ENCODE measurements at regions of chr3 and their contacts with region 1.

Region 1: DNA sequence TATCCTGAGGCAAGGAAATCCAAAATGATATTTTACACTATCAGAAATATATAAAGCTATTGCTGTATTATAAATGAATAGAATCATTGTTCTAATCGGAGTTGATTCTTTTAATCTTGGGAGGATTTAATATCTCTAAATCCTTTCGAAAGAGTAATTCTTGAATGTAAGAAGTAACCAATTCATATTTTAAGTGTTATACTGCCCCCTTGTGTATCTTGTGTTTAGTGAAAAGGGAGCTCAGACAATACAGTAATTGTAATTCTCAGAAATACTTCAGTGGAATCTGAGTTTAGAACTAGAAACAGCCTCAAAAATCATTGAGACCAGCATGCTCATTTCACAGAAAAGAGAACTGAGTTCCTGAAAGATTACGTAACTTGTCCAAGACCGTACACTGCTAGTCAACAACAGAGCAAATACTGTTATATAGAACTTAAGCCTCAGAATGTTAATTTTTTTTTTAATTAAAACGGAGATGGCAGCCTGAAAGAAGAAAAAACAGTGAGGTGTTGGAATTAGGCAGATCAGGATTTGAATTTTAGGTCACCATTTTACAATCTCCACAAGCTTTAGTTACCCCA is 42.9 kb downstream of the PLCH1 start:
- DNase-seq: no peak
- ATAC-seq: peak; percentile 57 to 78
- H3K4me3 ChIP-seq: no peak overlapping the region
- H3K27ac ChIP-seq: no peak overlapping the region
- H3K4me1 ChIP-seq: no peaks in the 10 kb centered on the region
- H3K27me3 ChIP-seq: no peaks in the 10 kb centered on the region

Region 2: GRCh38 chr3:155352900-155353490 is 349.0 kb before region 1 on chr3:
- intact Hi-C with region 1: loop called (anchors 5 kb)
- DNase-seq: no peak
- ATAC-seq: no peak
- H3K4me3 ChIP-seq: no peak overlapping the region
- H3K27ac ChIP-seq: no peak overlapping the region
- H3K4me1 ChIP-seq: no peaks in the 10 kb centered on the region
- H3K27me3 ChIP-seq: no peaks in the 10 kb centered on the region

Region 3: DNA sequence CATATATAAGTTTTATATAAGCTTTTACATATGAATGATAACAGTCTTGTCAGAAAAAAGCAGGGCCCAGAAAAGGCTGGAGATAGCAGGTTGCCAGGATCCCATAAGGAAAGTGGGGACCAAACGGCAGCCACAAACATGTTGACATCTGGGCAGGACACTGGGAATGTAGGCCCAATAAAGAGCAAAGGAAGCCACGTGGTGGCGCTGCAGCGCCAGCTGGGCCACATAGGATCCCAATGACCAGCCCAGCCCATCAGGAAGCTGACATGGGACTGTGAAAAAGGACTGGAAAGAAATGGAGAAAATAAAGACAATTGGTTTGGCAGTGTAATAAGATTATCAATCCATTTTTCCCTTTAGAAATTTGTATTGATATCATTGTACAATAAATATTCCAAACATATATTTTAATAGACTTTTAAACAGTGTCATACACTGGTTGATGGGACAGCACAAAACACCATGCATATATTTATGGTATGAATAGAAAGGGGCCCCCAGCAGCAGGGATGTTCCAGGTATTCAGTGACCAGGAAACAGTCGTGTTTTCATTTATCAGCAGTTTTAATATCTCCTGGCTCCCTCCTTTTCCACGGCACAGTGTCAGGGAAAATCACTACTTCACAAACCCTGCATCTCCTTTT is 319.5 kb before region 1 on chr3:
- intact Hi-C with region 1: loop called in 2 of 4 experiments (anchors 2 to 10 kb)
- DNase-seq: peak; percentile 72 to 94 (median 90)
- ATAC-seq: peak; percentile 85 to 90
- H3K4me3 ChIP-seq: no peak overlapping the region
- H3K27ac ChIP-seq: no peak overlapping the region
- H3K4me1 ChIP-seq: peaks cover 3% of the 10 kb centered on the region
- H3K27me3 ChIP-seq: no peaks in the 10 kb centered on the region